Activated CD4-positive, alpha-beta T cell treated with anti-CD3 and anti-CD28 coated beads, Interleukin-2, amount 10 ng/mL, durations not matched to agents 24 days and 14 days (primary cell): ENCODE measurements at regions of chr2 and their contacts with region 1.

Region 1: DNA sequence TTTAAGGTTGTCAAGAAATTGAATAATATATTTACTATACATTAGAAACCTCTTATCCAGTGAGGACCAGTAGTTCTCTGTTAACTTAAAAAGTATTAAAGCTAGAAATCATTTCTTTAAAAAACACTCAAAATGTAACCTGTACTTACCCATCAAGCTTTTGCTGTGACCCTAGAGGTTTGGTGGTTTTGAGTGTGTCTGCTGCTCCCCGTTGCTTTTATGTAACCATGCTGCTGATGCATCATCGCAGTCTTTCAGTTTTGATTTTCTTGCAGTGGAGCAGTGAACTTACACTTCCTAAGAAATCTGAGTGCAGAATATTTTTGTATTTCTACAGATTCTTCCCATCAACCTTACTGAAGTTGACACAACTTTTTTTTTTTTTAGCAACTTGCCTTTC is 34.2 kb downstream of the MRPS9 start:
- DNase-seq: peak; percentile 80
- H3K4me3 Mint-ChIP-seq: no peak overlapping the region
- H3K27ac Mint-ChIP-seq: no peak overlapping the region
- H3K4me1 Mint-ChIP-seq: peaks cover 16% of the 10 kb centered on the region
- H3K27me3 Mint-ChIP-seq: no peaks in the 10 kb centered on the region

Region 2: GRCh38 chr2:105037572-105038382 is 34.3 kb before region 1 on chr2 and contains the start of gene MRPS9:
- intact Hi-C with region 1: loop called (anchors 5 kb)
- DNase-seq: peak; percentile 99
- H3K4me3 Mint-ChIP-seq: peak within 1 kb of the TSS; percentile 96
- H3K27ac Mint-ChIP-seq: peak within 1 kb of the TSS; percentile 91
- H3K4me1 Mint-ChIP-seq: peaks cover 20% of the 10 kb centered on the region
- H3K27me3 Mint-ChIP-seq: no peaks in the 10 kb centered on the region
- total RNA-seq, gene MRPS9: 32.4 and 33.3 TPM in 2 replicates

Region 3: GRCh38 chr2:105114551-105114950 is 42.5 kb after region 1 on chr2:
- intact Hi-C with region 1: no loop called
- DNase-seq: no peak
- H3K4me3 Mint-ChIP-seq: no peak overlapping the region
- H3K27ac Mint-ChIP-seq: no peak overlapping the region
- H3K4me1 Mint-ChIP-seq: no peaks in the 10 kb centered on the region
- H3K27me3 Mint-ChIP-seq: no peaks in the 10 kb centered on the region